ENCODE measurements at regions of chr12 and their contacts with region 1.

Region 1: GRCh38 chr12:106149096-106149784 is 10.5 kb upstream of the NUAK1 start:
- DNase-seq: no peak

Region 2: DNA sequence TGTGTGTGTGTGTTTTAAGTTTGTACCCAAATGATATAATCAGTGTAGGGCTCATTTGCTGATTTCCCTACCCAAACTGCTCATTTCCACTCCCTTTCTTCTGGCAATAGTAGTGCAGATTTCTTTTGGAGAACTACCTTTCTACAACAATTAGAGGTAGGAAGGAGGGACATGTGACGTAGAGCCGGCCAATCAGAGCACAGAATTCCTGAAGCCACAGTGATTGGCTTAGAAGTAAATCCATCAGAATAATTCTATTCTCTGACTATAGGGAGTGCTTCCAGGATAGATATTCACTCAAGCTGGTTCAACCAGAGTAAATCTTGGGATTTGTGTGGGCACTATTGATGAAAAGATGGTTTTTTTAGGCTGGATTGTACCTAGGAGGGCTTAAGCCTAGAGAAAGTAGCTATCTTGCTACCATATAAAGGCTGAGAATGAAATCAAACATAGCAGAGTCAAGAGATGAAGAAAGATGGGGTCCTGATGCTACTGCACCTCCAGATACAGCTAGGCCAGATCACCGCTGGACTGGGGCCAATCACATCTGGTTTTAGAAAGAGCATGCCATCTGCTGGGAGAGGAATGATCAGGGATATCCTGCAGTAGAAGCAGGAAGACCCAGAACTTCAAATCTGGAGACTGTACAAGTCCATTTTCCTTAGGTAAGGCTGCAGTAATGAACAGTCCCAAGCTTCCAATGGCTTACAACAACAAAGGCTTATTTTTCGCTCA is 43.6 kb after region 1 on chr12:
- intact Hi-C with region 1: loop called (anchors 5 kb)
- DNase-seq: no peak